Activated CD4-positive, alpha-beta memory T cell treated with anti-CD3 and anti-CD28 coated beads for 36 hours (primary cell): ENCODE measurements at regions of chr6 and their contacts with region 1.

Region 1: GRCh38 chr6:24910961-24911712 is 24.6 kb downstream of the RIPOR2 start:
- DNase-seq: peak; percentile 70
- H3K4me3 Mint-ChIP-seq: peak overlapping the region; percentile 91
- H3K27ac Mint-ChIP-seq: peak overlapping the region; percentile 95
- H3K4me1 Mint-ChIP-seq: peaks cover 85% of the 10 kb centered on the region
- H3K27me3 Mint-ChIP-seq: no peaks in the 10 kb centered on the region

Region 2: DNA sequence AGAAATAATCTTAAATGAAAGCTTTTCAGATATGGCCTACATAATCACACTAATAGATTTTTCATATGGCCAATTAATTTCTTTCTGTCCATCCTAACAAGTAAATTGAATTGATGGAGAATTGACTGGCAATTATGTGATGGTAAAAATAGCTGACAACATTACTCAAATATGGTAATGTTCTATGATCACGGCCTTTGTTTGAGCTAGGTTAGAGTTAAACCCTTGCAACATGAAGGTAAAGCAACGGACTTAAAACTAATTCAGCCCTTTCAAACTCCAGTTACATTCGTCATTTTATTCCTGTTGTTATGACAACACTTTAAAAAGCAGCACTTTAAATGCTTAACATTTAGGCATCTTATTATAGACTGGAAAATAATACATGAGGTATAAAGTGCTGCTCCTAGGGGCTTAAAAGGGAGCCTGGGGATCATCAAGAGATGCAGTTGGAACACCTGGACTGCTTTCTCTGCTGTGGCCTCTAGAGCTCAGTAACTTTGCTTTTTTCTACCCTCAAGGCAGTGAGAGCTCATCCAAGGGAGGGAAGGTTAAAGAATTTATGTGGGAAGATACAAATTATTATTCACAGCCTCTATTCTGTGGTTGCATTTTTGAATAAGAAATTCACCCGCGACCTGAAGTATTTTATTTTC is 22.3 kb before region 1 on chr6:
- CTCF ChIA-PET with region 1: interaction called, 12 read pairs
- POLR2A ChIA-PET with region 1: interaction called, 3 read pairs
- intact Hi-C with region 1: no loop called
- DNase-seq: no peak
- H3K4me3 Mint-ChIP-seq: no peak overlapping the region
- H3K27ac Mint-ChIP-seq: peak overlapping the region; percentile 77
- H3K4me1 Mint-ChIP-seq: peaks cover 84% of the 10 kb centered on the region
- H3K27me3 Mint-ChIP-seq: no peaks in the 10 kb centered on the region

Region 3: DNA sequence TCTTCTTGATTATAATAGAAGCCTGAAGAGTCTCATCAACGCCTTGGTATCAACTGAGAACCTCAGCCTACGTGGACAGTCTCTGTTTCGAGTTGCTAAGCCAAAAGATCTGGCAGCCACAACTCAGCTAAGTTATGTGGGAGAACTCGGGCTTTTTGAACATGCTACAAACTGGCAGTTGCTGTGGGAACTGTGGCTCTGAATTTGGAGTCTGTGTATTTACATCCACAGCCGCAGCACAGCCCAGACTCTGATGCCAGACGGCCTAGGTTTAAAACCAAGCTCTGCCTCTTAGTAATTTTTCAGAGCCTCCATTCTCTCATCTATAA is 11.2 kb before region 1 on chr6:
- CTCF ChIA-PET with region 1: interaction called, 50 read pairs
- POLR2A ChIA-PET with region 1: interaction called, 41 read pairs
- intact Hi-C with region 1: loop called (anchors 1 kb)
- DNase-seq: peak; percentile 70
- H3K4me3 Mint-ChIP-seq: peak overlapping the region; percentile 59
- H3K27ac Mint-ChIP-seq: peak overlapping the region; percentile 90
- H3K4me1 Mint-ChIP-seq: peaks cover 88% of the 10 kb centered on the region
- H3K27me3 Mint-ChIP-seq: no peaks in the 10 kb centered on the region

Region 4: DNA sequence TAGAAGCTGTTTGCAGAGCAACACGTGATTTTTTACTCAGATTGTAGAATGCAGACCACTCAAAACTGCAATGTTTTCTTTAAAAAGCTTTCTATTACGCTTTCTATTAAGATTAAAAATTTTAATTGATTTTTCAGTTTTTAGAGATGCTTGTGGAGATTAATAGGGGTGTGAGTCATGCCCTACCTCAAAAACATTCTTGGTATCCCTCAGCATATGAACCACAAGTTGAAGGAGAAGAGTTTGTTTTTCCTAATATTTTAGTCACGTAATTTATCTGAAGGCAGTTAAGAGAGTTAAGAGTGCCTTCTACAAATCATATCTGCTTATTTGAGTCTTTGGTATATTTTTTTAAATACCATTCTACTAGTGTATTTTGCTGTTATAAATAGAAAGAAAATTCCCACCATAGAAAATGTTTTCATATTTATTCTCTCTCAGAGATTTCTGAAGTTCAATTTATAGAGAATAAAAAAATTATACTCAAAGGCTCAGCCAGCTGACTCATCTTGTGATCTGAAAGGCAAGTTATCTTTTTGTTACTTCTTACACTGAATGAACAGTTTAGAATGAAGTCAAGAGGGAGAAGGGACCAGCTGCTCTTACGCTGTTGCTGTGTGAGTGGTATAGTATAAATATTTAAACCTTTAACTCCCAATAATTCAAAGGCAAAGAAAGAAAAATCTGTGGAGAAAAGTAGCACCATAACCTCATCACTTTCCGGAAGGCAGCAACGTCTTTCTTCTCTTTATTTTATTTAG is 17.0 kb after region 1 on chr6:
- CTCF ChIA-PET with region 1: interaction called, 109 read pairs
- POLR2A ChIA-PET with region 1: interaction called, 45 read pairs
- intact Hi-C with region 1: loop called (anchors 1 kb)
- DNase-seq: no peak
- H3K4me3 Mint-ChIP-seq: peak overlapping the region; percentile 80
- H3K27ac Mint-ChIP-seq: peak overlapping the region; percentile 97
- H3K4me1 Mint-ChIP-seq: peaks cover 81% of the 10 kb centered on the region
- H3K27me3 Mint-ChIP-seq: peaks cover 2% of the 10 kb centered on the region

Region 5: GRCh38 chr6:25006565-25007001 is 95.4 kb after region 1 on chr6:
- CTCF ChIA-PET with region 1: interaction called, 3 read pairs
- POLR2A ChIA-PET with region 1: no interaction called
- intact Hi-C with region 1: loop called (anchors 2 kb)
- DNase-seq: peak; percentile 66
- H3K4me3 Mint-ChIP-seq: peak overlapping the region; percentile 10
- H3K27ac Mint-ChIP-seq: peak overlapping the region; percentile 78
- H3K4me1 Mint-ChIP-seq: peaks cover 77% of the 10 kb centered on the region
- H3K27me3 Mint-ChIP-seq: no peaks in the 10 kb centered on the region

Region 6: DNA sequence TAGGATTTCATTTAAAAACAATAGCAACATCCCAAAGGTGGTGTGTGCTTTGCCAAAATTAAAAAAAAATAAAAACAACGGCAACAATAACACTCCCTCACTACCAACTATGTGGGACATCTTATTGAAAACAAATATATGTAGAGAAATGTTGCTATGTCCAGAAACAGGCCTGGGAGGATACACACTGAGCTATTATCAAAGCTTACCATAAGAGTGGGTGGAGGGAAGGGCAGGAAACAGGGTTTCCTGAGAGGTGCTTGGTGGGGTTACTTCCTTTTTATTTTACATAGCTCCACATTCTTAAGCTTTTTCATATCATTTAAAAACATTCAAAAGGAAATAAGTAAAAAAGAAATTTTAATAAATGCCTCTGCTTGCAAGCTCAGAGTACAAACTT is 174.6 kb after region 1 on chr6:
- CTCF ChIA-PET with region 1: no interaction called
- POLR2A ChIA-PET with region 1: no interaction called
- intact Hi-C with region 1: no loop called
- DNase-seq: no peak
- H3K4me3 Mint-ChIP-seq: no peak overlapping the region
- H3K27ac Mint-ChIP-seq: no peak overlapping the region
- H3K4me1 Mint-ChIP-seq: peaks cover 32% of the 10 kb centered on the region
- H3K27me3 Mint-ChIP-seq: no peaks in the 10 kb centered on the region